H1 (cell line): ENCODE measurements at regions of chr5 and their contacts with region 1.

Region 1: GRCh38 chr5:172904643-172905347 is 54.4 kb upstream of the RPL26L1 start:
- DNase-seq: no peak
- H3K4me3 ChIP-seq: no peak overlapping the region
- H3K27ac ChIP-seq: no peak overlapping the region
- H3K4me1 ChIP-seq: peaks cover 0 to 9% (median 4%) of the 10 kb centered on the region in 4 experiments; a peak in 5 of 7 replicates
- H3K27me3 ChIP-seq: no peaks in the 10 kb centered on the region
- CTCF ChIP-seq: no peak
- EP300 ChIP-seq: no peak
- POLR2A ChIP-seq: no peak
- RAD21 ChIP-seq: no peak

Region 2: DNA sequence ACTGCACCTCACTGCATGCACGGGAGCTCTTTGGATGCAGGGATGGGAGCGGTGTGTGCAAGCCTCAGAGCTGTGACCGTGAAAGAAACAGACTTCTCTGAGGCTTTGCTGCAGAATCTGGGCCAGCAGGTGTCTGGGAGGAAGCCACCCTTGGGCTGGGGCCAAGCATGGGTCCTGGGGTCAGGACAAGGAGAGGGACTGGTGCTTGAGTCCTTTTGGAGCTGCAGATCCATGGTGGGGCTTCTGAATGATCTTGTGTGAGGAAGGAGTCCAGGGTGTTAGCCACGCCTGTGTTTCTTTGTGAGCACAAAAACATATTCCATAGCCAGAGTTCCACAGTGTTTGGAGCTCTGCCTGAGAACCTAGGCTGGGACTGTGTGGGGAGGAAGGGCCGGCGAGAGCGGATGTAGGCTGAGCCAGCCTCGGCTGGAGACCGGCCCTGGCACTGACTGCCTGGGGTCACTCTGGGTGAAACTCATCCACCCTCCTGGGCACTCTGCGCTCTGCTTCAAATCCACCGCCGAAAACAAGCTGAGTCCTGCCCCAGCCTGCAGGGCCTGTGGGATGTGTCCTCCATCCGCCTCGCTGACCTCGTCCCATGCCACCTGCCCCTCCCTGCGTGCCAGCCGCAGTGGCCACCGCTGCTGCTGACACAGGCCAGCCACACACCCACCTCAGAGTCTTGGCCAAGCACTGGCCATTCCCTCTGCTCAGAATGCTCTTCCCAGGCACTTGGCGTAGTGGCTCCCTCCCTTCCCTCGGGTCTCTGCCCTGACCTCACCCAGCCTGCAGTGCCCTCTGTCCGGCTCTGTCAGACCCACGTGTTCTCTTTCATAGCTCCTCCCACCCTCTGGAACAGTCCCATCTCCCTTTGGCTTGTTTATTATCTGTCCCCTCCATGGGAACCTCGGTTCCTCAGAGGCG is 44.0 kb before region 1 on chr5:
- CTCF ChIA-PET with region 1: no interaction called
- POLR2A ChIA-PET with region 1: no interaction called
- DNase-seq: no peak
- H3K4me3 ChIP-seq: no peak overlapping the region
- H3K27ac ChIP-seq: no peak overlapping the region; the same call in 1 of the 2 replicates
- H3K4me1 ChIP-seq: peaks cover 0 to 3% (median under 1%) of the 10 kb centered on the region in 4 experiments; a peak in 3 of 7 replicates
- H3K27me3 ChIP-seq: no peaks in the 10 kb centered on the region; a peak in 1 of 7 replicates
- CTCF ChIP-seq: no peak
- EP300 ChIP-seq: no peak
- POLR2A ChIP-seq: no peak
- RAD21 ChIP-seq: no peak

Region 3: DNA sequence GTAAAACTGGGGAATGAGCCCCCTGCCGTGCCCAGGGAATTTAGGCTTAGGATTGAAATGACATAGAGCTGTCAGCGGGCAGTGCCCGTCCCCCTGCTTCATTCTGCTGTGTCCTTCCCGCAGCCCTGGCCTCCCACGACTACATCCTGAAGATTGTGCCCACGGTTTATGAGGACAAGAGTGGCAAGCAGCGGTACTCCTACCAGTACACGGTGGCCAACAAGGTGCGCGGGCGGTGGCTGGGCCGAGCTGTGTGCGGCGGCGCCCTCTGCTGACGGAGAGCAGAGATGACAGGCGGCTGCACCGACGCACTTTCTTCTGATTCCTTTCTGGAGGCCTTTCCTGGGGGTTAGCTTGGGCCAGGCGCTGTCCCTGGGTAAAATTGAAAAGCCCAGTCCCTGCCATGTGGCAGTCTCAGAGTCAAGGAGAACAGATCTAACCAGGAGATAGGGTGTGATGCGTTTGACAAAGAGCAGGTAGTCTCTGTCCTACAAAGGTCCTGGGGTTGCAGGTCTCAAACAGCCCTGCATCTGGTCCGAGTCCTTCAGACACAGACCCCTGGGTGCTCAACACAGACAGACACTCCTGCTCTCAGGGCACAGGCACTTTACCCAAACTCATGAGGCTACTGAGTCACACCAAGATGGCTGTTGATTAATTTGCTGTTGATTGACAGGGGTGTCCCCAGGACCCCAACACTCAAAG is 27.7 kb after region 1 on chr5:
- CTCF ChIA-PET with region 1: interaction called, 22 read pairs
- POLR2A ChIA-PET with region 1: no interaction called
- DNase-seq: peak in 1 of 2 experiments; percentile 84
- H3K4me3 ChIP-seq: no peak overlapping the region
- H3K27ac ChIP-seq: no peak overlapping the region
- H3K4me1 ChIP-seq: no peaks in the 10 kb centered on the region
- H3K27me3 ChIP-seq: no peaks in the 10 kb centered on the region
- CTCF ChIP-seq: peak; percentile 90 to 97 (median 94)
- EP300 ChIP-seq: no peak
- POLR2A ChIP-seq: no peak
- RAD21 ChIP-seq: peak; percentile 80 to 86

Region 4: GRCh38 chr5:173123416-173123815 is 218.6 kb after region 1 on chr5:
- CTCF ChIA-PET with region 1: no interaction called
- POLR2A ChIA-PET with region 1: no interaction called
- DNase-seq: no peak
- H3K4me3 ChIP-seq: no peak overlapping the region
- H3K27ac ChIP-seq: no peak overlapping the region
- H3K4me1 ChIP-seq: no peaks in the 10 kb centered on the region
- H3K27me3 ChIP-seq: no peaks in the 10 kb centered on the region
- CTCF ChIP-seq: no peak
- EP300 ChIP-seq: no peak
- POLR2A ChIP-seq: no peak
- RAD21 ChIP-seq: no peak

Region 5: DNA sequence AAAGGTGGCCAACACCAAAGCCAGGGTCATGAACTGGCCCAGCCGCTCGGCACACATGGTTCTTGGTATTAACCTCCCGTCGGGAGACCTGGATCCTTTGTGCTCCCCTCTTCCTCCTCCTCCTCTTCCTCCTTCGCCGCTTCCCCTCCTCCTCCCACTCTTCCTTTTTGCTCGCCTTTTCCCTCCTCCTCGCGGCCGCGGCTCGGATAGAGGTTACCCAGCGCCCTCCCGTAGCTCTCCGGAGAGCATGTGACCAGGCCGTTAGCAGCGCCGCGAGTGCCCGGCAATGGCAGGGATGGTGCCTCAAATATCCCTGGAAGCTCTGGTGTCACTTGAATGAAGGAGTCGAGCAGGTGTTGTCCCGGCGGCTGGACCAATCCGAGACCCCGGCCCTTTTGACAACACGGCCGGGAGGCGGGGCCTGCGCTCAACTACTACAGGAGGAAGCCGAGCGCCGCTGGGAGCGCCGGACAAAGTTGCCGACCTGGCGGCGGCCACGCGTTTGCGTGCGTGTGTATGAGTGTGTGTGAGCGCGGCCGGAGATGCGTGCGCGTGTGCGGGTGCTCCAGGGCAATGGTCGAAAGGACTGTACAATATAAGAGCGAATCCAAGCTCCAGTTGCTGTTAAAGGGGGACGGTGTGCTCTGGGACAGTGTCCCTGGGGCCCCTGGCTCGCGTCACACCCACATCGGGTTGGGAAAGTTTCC is 423.5 kb after region 1 on chr5 and contains the start of gene STC2:
- CTCF ChIA-PET with region 1: no interaction called
- POLR2A ChIA-PET with region 1: no interaction called
- DNase-seq: peak; percentile 91 to 93
- H3K4me3 ChIP-seq: peak within 1 kb of the TSS; percentile 90 to 95 (median 91)
- H3K27ac ChIP-seq: peak within 1 kb of the TSS; percentile 81
- H3K4me1 ChIP-seq: peaks cover 7 to 30% (median 14%) of the 10 kb centered on the region in 4 experiments
- H3K27me3 ChIP-seq: peaks cover 0 to 9% (median 7%) of the 10 kb centered on the region in 4 experiments; a peak in 6 of 7 replicates
- CTCF ChIP-seq: no peak
- EP300 ChIP-seq: no peak
- POLR2A ChIP-seq: peak in 1 of 2 experiments; percentile 70; a peak in 2 of 3 replicates
- RAD21 ChIP-seq: no peak
- total RNA-seq, gene STC2: 40.0 and 53.1 TPM in 2 replicates